Activated naive CD4-positive, alpha-beta T cell treated with anti-CD3 and anti-CD28 coated beads for 36 hours (primary cell): ENCODE measurements at regions of chr2 and their contacts with region 1.

Region 1: DNA sequence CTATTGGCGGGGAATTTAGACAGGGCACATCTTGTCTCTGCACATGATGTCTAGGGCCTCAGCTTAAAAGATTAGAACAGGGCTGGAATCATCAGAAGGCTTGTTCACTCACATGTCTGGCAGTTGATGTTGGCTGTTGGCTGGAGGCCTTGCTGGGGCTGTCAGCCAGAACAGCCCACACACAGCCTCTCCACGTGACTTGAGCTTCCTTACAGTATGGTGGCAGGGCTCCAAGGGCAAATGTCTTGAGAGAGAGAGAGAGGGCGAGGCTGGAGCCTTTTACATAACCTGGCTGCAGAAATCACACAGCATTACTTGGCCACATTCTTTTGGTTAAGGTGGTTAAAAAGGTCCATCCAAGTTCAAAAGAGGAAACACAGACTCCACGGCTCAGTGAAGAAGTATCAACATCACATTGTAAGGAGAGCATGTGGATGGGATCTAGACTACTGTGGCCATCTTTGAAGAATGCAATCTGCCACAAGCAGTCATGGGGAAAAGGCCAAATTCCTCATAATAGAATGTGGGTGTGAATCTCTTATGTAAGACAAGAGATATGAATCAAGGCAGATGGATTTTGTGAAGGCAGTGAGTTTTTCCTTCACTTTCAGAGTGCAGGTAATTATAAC is 30.4 kb downstream of the SRSF7 start:
- DNase-seq: no peak
- H3K4me3 Mint-ChIP-seq: peak overlapping the region; percentile 11
- H3K27ac Mint-ChIP-seq: peak overlapping the region; percentile 86
- H3K4me1 Mint-ChIP-seq: peaks cover 65% of the 10 kb centered on the region
- H3K27me3 Mint-ChIP-seq: no peaks in the 10 kb centered on the region

Region 2: GRCh38 chr2:38315707-38316333 is 404.9 kb before region 1 on chr2:
- CTCF ChIA-PET with region 1: no interaction called
- intact Hi-C with region 1: loop called (anchors 5 kb)
- DNase-seq: peak; percentile 32
- H3K4me3 Mint-ChIP-seq: no peak overlapping the region
- H3K27ac Mint-ChIP-seq: no peak overlapping the region
- H3K4me1 Mint-ChIP-seq: peaks cover 12% of the 10 kb centered on the region
- H3K27me3 Mint-ChIP-seq: no peaks in the 10 kb centered on the region

Region 3: DNA sequence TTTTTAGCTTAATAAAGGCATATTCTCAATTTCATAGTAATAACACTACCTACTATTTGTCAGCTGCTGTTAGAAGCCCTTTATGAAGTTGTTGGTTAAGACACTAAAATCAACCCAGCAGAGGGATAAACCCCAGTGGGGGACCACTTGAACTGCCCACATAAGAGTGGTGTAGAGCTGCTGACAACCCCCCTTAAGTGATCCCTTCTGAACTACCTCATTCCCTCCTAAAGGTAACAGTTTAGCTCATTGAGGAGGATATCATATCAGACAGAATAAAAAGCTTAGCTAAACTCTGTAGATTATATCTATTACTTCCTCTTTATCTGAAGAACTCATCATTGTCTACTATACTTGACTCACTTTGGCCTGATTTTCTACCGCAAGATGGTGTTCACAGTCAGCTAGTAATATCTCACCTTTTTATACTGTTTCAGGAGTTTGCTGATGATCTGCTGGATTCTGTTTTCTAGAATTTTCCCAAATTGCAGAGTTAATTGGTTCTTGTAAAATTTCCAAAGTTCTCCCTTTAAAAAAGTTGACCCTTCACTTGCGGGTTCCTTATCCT is 38.6 kb before region 1 on chr2:
- CTCF ChIA-PET with region 1: interaction called, 10 read pairs
- intact Hi-C with region 1: loop called (anchors 1 kb)
- DNase-seq: no peak
- H3K4me3 Mint-ChIP-seq: no peak overlapping the region
- H3K27ac Mint-ChIP-seq: peak overlapping the region; percentile 72
- H3K4me1 Mint-ChIP-seq: peaks cover 45% of the 10 kb centered on the region
- H3K27me3 Mint-ChIP-seq: no peaks in the 10 kb centered on the region

Region 4: DNA sequence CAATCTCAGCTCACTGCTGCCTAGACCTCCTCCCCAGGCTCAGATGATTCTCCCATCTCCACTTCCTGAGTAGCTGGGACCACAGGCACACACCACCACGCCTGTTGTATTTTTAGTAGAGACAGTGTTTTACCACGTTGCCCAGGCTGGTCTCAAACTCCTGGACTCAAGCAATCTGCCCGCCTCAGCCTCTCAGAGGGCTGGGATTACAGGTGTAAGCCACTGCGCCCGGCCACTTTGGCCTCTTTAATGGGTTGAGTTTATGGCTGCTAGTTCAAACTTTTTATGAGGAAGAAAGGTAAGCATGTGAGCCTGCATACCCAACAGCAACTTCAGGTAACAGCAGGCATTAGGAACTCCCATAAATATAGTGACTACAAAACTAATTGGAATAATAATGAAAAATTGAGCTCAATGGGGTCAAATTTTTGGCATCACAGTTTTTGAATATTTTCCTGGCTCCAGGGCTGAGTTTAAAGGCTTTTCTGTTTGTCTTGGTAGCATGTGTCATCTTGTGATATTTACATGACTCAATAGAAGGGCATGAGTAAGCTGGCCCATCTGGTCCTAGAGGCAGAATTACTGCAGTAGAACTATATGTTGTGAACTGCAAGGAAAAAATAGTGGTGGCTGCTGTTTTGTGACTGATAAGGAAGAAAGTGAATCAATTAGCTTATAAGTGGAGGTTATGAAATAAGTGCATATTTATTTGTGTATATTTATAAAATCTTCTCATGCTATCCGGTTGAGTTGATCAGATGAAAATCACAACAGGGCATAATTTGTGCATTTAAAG is 30.0 kb before region 1 on chr2:
- CTCF ChIA-PET with region 1: interaction called, 6 read pairs
- intact Hi-C with region 1: loop called (anchors 1 kb)
- DNase-seq: peak; percentile 50
- H3K4me3 Mint-ChIP-seq: no peak overlapping the region
- H3K27ac Mint-ChIP-seq: peak overlapping the region; percentile 71
- H3K4me1 Mint-ChIP-seq: peaks cover 57% of the 10 kb centered on the region
- H3K27me3 Mint-ChIP-seq: no peaks in the 10 kb centered on the region

Region 5: DNA sequence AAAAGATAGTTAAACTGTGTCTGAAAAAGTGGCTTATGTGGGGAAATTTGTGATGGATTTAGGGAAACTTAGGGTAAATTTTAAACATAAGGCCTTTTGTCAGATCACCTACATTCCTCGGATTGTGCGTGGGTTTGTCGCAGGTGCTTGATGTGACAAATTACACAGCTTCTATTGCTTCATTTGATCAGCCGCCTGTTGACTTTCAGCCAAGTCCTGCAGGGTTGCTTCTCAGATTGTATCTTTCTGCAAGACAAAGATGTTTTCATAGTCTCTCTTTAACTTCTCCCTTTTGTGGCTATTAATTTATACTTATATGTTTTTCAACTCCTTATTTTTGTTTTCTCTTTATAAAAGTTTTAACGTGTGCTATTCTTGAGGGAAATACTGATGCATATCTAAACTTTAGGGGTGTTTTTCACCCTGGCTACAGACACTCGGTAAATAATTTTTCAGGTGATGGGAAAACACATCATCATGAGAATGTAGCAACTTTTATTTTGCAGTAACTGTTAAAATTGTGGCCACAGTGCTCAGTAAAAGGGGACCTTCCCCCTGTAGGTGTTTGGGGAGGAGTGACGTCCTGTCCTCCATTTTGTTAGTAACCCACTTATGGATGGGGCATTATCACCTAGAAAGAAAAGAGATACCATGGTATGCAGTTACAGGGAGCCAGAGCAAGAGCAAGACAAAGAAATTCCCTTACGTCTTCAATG is 23.4 kb before region 1 on chr2:
- CTCF ChIA-PET with region 1: interaction called, 6 read pairs
- intact Hi-C with region 1: loop called (anchors 1 kb)
- DNase-seq: peak; percentile 59
- H3K4me3 Mint-ChIP-seq: no peak overlapping the region
- H3K27ac Mint-ChIP-seq: peak overlapping the region; percentile 86
- H3K4me1 Mint-ChIP-seq: peaks cover 72% of the 10 kb centered on the region
- H3K27me3 Mint-ChIP-seq: no peaks in the 10 kb centered on the region

Region 6: GRCh38 chr2:38709567-38710194 is 11.0 kb before region 1 on chr2:
- CTCF ChIA-PET with region 1: interaction called, 8 read pairs
- intact Hi-C with region 1: loop called (anchors 1 kb)
- DNase-seq: peak; percentile 80
- H3K4me3 Mint-ChIP-seq: peak overlapping the region; percentile 49
- H3K27ac Mint-ChIP-seq: peak overlapping the region; percentile 95
- H3K4me1 Mint-ChIP-seq: peaks cover 68% of the 10 kb centered on the region
- H3K27me3 Mint-ChIP-seq: no peaks in the 10 kb centered on the region

Region 7: GRCh38 chr2:38907743-38908562 is 187.2 kb after region 1 on chr2:
- CTCF ChIA-PET with region 1: no interaction called
- intact Hi-C with region 1: no loop called
- DNase-seq: no peak
- H3K4me3 Mint-ChIP-seq: no peak overlapping the region
- H3K27ac Mint-ChIP-seq: no peak overlapping the region
- H3K4me1 Mint-ChIP-seq: peaks cover 8% of the 10 kb centered on the region
- H3K27me3 Mint-ChIP-seq: no peaks in the 10 kb centered on the region